Left cardiac atrium (tissue), 4 donors: ENCODE measurements at regions of chr14 and their contacts with region 1.

Region 1: DNA sequence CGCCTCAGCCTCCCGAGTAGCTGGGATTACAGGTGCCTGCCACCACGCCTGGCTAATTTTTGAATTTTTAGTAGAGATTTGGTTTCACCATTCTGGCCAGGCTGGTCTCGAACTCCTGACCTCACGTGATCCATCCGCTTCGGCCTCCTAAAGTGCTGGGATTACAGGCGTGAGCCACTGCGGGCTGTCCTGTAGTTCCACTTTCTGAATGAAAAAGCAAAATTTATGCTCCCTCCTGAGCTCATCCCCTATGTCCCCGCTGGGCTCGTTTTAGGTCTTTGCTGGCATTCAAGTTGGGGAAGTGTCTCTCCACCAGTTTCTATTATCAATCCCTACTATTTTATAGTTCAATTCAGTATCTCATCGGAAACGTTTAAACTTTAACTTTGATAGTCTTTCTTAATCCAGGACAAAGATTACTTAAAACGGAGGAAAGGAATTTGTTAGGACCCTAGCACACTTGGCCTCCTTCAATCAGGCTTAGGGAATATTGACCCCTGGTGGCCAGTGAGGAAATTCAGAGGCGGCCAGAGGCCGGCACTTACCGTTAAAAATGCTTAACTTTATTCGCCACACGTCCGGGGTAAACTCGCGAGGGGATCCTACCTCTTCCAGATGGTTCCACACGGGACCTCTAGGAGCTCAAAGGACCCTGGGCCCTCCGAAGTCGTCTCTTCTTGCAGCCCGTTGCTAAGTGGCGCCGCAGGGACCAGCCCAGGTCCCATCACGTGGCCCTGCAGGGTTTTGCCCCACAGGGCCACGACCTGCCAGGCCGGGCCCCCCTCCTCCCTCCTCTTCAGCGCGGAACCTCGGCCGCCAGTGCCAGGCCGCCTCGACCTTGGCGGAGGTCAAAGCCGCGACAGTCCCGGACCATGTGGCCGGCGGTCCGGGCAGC is 11.4 kb upstream of the DNAL1 start:
- DNase-seq: peak; percentile 47
- ATAC-seq: peak; percentile 89 to 91

Region 2: DNA sequence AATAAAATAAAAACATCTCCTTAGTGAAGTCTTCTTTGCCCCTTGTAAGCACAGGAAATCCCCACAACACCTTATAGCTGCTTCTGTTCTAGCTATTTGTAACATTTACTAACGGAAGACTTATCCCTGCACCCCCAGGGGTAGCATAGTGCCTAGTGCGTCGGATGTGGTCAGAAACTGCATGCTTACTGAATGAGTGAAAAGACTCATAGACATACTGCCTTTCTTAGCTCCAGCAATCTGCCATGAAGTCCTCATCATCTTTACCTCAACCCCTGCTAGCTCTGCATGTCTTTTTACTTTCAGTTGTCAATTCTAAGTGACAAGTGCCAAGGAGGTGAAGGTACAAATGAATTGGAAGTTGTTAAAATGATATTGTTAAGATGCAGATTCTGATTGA is 129.7 kb before region 1 on chr14:
- intact Hi-C with region 1: loop called (anchors 2 to 5 kb)
- DNase-seq: no peak
- ATAC-seq: no peak